Adrenal gland (tissue), 19 donors: ENCODE measurements at regions of chr1 and their contacts with region 1.

Region 1: DNA sequence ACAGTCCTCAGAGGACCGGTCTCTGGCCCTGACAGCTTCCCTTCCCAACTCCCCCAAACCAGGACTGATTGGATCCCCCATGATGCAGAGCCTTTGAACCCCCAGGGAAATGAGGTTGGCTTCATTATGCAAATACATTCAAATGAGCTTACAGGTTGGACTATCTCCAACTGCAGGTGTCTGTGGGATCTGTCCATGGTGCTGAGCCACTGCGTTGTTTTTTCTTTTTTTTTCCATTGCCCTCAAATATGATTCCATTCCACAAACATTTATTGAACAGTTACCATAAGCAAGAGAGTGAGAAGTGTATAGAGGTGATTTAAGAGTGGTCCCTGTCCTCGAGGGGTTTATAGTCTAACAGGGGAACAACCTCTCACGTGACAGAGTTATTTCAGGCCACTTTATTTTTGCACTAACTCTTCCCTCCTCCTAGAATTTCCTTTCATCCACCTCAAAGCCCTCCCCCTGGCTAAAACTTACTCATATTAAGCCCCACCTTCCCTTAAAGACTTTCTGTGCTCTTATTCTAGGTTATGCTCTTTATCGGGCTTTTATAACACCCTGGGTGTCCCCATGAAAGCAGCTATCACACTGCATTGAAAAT is 21.9 kb downstream of the DLGAP3 start:
- DNase-seq: no peak
- H3K4me3 ChIP-seq: no peak overlapping the region
- H3K27ac ChIP-seq: no peak overlapping the region
- H3K4me1 ChIP-seq: no peaks in the 10 kb centered on the region
- H3K27me3 ChIP-seq: no peaks in the 10 kb centered on the region
- CTCF ChIP-seq: no peak
- POLR2A ChIP-seq: no peak

Region 2: GRCh38 chr1:34213956-34214355 is 693.6 kb before region 1 on chr1:
- intact Hi-C with region 1: loop called in 1 of 2 experiments (anchors 10 kb)
- DNase-seq: no peak
- H3K4me3 ChIP-seq: no peak overlapping the region
- H3K27ac ChIP-seq: no peak overlapping the region
- H3K4me1 ChIP-seq: no peaks in the 10 kb centered on the region
- H3K27me3 ChIP-seq: peaks cover 5% of the 10 kb centered on the region
- CTCF ChIP-seq: no peak
- POLR2A ChIP-seq: no peak

Region 3: DNA sequence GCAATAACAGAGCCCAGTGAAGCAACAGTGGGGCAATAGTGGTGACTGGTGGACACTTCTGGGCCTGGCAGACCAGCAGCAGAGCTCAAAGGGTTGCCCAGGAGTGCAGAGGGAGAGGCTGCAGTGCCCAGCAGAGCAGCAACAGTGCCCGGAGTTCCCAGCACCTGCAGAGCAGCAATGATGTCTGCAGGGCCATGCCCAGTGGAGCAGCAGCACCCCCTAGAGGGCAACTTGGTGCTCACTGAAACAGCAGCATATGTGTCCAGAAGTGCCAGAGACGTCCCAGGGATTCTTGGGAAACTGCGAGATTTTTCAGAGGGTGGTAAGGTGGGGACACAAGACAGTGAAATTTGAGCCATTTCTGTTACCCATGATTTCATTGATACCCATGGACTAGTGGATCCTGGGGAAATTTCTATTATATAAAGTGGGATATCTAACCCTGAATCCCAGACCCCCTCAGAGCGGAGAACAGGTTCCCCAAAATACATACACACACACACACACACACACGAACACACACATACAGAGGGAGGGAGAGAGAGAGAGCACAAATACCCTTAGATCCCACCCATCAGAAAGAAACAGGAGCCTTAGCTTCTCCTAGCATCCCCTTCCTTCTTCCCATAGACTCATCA is 309.6 kb before region 1 on chr1:
- intact Hi-C with region 1: no loop called
- DNase-seq: peak; percentile 73 to 87 (median 83)
- H3K4me3 ChIP-seq: no peak overlapping the region
- H3K27ac ChIP-seq: no peak overlapping the region
- H3K4me1 ChIP-seq: no peaks in the 10 kb centered on the region
- H3K27me3 ChIP-seq: no peaks in the 10 kb centered on the region
- CTCF ChIP-seq: peak; percentile 78 to 91 (median 84)
- POLR2A ChIP-seq: no peak

Region 4: GRCh38 chr1:35287807-35288640 is 380.4 kb after region 1 on chr1:
- intact Hi-C with region 1: no loop called
- DNase-seq: no peak
- H3K4me3 ChIP-seq: no peak overlapping the region
- H3K27ac ChIP-seq: no peak overlapping the region
- H3K4me1 ChIP-seq: peaks cover 15 to 16% of the 10 kb centered on the region in 2 donors
- H3K27me3 ChIP-seq: no peaks in the 10 kb centered on the region
- CTCF ChIP-seq: no peak
- POLR2A ChIP-seq: no peak